Posterior vena cava (tissue), 2 donors: ENCODE measurements at regions of chr1 and their contacts with region 1.

Region 1: DNA sequence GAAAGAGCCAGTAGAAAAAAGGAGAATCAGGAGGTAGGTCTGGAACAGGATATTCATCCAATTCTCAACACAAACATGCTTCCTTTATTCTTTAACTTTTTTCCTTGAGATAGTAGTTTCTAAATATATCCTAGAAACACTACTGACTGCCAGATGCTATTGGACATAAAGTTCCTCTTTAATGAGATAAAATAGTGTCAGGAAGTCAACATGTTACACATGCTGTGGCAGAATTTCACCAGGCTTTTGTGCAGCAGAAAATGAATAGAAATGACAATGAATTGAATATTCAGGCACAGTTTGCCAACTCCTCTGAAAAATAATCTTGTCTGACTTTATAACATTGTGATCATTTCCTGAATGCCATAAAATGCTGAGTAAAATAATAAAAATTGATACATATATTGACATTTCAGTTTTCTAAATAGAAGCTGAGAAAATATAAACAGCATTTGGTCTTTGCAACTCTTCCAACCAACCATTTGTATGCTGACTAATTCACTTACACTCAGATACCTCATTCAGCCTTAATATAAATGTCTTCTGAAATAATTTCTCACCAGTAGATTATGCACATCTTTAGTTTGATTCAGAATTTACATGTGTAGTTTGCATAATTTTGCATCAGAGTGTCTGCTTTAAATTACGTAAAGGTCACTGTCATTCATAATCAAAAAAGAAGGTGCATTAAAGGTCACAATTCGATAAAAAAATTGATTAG is 486.1 kb upstream of the ADGRL2 start:
- DNase-seq: no peak

Region 2: DNA sequence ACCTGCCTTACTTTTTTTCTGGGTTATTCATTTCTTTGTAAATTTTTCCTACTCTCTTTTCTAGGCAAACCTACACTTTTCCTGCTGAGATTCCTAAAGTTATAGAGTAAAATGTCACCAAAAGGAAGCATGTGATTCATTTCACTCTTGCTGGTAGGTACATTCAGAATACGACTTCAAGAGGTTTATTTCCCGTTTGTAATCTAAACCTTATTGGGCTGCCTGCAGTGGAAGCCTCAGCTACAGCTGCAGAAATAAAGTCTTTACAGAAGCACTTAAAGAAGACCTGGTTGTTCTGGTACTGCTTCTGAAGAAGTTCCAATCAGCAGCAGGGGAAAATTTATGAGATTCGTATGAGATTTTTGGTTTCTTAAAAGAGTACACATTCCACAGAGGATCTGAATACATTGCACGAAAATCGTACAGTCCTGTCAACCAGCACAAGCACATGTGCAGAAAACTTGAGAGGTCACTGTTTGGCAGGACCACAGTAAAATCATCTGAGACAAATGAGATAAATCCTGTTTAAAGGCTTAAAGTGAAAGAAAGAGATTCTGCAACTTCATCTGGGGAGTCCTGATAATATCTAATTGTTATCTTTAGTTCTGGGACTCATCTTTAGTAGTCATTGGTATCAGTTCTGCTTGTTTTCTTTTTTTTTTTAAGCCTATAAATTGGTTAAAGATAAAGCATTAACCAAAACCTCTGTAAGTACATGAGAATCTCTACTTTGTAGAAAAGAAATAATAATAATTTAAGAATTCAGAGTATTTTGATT is 376.2 kb after region 1 on chr1:
- intact Hi-C with region 1: loop called in 1 of 2 experiments (anchors 5 kb)
- DNase-seq: no peak